ENCODE measurements at regions of chr19 and their contacts with region 1.

Region 1: GRCh38 chr19:12983542-12984142 is 11.6 kb upstream of the NFIX start:
- DNase-seq: peak; percentile 88
- H3K4me3 Mint-ChIP-seq: no peak overlapping the region
- H3K27ac Mint-ChIP-seq: no peak overlapping the region
- H3K4me1 Mint-ChIP-seq: no peaks in the 10 kb centered on the region
- H3K27me3 Mint-ChIP-seq: no peaks in the 10 kb centered on the region

Region 2: GRCh38 chr19:13033819-13034611 is 50.4 kb after region 1 on chr19:
- CTCF ChIA-PET with region 1: interaction called, 5 read pairs
- POLR2A ChIA-PET with region 1: no interaction called
- intact Hi-C with region 1: loop called (anchors 5 kb)
- DNase-seq: peak; percentile 60
- H3K4me3 Mint-ChIP-seq: no peak overlapping the region
- H3K27ac Mint-ChIP-seq: no peak overlapping the region
- H3K4me1 Mint-ChIP-seq: peaks cover 5% of the 10 kb centered on the region
- H3K27me3 Mint-ChIP-seq: no peaks in the 10 kb centered on the region

Region 3: DNA sequence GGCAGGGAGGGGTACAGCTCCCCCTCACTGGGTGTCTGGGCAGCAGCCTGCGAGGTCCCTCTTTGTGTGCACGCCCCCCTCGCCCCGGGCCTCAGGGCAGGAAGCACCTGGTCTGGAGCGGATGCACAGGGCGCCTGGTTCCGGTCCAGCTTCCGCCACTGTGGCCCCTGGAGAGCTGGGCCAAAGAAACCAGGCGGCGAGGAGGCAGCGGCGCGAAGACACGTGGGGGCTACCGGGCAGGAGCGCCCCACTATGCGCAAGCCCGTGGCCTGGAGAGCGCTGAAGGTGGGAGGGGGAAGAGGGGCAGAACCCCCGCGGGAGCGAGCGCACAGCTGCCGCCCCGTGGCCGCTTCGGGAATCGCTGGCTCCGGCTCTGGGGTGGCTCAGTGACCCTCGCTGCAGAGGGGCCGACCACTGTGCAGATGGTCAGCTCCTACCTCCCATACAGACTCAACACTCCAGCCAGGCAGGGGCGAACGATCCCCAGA is 120.8 kb after region 1 on chr19:
- CTCF ChIA-PET with region 1: interaction called, 22 read pairs
- POLR2A ChIA-PET with region 1: no interaction called
- intact Hi-C with region 1: no loop called
- DNase-seq: peak; percentile 81
- H3K4me3 Mint-ChIP-seq: peak overlapping the region; percentile 92
- H3K27ac Mint-ChIP-seq: peak overlapping the region; percentile 94
- H3K4me1 Mint-ChIP-seq: peaks cover 32% of the 10 kb centered on the region
- H3K27me3 Mint-ChIP-seq: no peaks in the 10 kb centered on the region

Measured in activated CD4-positive, alpha-beta memory T cell treated with anti-CD3 and anti-CD28 coated beads for 36 hours (primary cell).